ENCODE measurements at regions of chr17 and their contacts with region 1.

Region 1: DNA sequence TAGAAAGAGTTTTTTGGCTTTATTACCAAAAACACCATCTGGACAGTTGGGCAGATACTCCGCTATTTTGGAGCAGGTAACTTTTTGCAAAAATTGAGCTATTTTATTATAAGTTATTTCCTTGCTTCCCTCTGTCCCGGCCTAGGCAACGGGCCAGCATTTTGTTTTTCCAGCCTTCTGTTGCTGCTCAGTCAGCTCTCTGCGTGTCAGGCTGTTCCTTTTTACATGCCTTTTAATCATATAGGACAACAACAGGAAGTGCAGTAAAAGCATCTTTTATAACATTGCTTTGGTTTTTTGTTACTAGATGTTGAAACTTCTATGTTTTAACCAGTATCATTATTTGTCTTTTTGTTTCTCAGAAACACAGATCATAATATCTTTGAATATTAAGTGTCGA is 30.4 kb downstream of the PPM1D start:
- DNase-seq: no peak
- H3K4me3 ChIP-seq: no peak overlapping the region
- H3K27ac ChIP-seq: no peak overlapping the region
- H3K4me1 ChIP-seq: no peaks in the 10 kb centered on the region
- CTCF ChIP-seq: no peak

Region 2: GRCh38 chr17:60577147-60577915 is 53.0 kb before region 1 on chr17:
- CTCF ChIA-PET with region 1: no interaction called
- POLR2A ChIA-PET with region 1: no interaction called
- intact Hi-C with region 1: loop called (anchors 10 kb)
- DNase-seq: no peak
- H3K4me3 ChIP-seq: no peak overlapping the region
- H3K27ac ChIP-seq: no peak overlapping the region
- H3K4me1 ChIP-seq: no peaks in the 10 kb centered on the region
- CTCF ChIP-seq: peak; percentile 28; the same call in 1 of the 2 replicates